HEK293 (cell line): ENCODE measurements at regions of chr1 and their contacts with region 1.

Region 1: DNA sequence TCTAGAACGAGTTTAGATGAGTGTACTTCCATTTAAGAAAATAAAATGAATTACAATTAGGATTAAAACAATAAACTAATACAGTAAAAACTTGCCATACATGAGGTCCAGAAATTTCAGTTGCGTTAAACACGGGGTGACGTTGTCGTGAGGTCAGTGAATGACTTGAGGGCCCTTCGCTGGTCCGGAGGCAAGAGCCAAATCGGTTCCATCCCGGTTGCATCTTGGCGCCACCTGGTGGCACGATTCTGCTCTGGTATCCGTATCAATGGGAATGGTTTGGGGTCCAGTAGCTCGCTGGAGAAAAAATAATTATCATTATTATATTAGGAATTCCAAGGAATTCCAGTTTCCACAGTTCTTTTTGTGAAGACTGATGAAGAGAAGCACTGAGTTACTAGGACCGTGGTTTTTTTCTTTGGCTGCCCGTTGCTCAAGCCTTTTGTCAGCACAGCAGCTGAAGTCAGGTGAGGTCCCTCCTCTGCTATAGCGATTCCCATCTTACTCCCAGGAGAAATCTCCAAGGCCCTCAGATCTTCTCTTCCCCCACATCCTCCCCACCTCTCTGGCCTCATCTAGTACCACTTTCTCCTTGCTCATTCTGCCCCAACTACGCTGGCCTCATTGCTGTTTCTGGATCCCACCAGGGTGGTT is 161.4 kb downstream of the SLC35F3 start:
- H3K4me3 ChIP-seq: no peak overlapping the region
- H3K27ac ChIP-seq: no peak overlapping the region
- H3K4me1 ChIP-seq: no peaks in the 10 kb centered on the region
- CTCF ChIP-seq: peak; percentile 79

Region 2: DNA sequence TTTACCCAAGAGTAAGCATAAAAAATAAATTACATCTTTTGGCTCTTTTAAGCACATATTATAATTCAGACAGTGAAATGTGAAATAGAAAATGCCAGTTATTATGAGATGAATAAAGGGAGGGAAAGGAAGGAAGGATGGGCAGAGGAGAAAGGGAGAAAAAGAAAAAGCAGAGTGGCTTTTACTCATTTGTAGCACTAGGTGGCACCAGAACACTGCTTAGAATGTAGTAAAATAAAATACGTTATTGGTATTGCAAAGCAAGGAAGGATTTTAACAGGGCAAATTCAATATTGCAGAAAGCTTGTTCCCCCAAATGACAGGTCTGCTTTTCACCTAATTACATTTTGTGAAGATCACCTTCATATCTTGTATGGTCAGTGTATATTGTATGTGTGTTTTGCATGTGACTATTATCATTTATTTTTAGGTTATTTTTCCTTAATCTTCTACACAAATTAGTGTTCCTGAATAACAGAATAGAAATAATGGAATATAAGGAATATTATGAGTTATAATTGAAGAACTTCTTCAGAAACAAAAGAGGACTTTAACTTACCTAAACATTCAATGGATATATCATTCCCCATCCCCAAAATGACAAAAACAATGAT is 761.3 kb before region 1 on chr1:
- CTCF ChIA-PET with region 1: interaction called, 14 read pairs
- POLR2A ChIA-PET with region 1: no interaction called
- H3K4me3 ChIP-seq: no peak overlapping the region
- H3K27ac ChIP-seq: no peak overlapping the region
- H3K4me1 ChIP-seq: no peaks in the 10 kb centered on the region
- CTCF ChIP-seq: peak; percentile 92

Region 3: DNA sequence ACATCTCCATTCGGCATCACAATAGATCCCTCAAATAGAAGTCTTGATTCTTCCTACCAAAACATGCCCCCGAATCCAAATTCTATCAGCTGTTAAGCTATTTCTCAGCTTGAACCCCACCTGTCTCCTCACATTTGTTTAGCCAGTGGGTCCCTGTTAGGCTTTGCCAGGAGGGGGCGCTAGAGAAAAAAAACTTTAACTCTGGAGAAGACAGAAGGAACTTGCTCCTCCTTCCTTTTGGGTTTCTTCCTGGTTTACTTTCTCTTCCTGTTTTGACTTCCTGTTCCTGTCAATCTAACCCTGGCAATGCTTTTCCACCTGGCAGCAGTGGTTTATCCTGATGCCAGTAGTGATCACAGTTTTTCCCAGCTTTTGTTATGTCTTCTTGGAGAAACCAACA is 547.6 kb before region 1 on chr1:
- CTCF ChIA-PET with region 1: interaction called, 15 read pairs
- POLR2A ChIA-PET with region 1: no interaction called
- H3K4me3 ChIP-seq: no peak overlapping the region
- H3K27ac ChIP-seq: no peak overlapping the region
- H3K4me1 ChIP-seq: no peaks in the 10 kb centered on the region
- CTCF ChIP-seq: no peak

Region 4: GRCh38 chr1:233805786-233806185 is 260.1 kb before region 1 on chr1:
- CTCF ChIA-PET with region 1: no interaction called
- POLR2A ChIA-PET with region 1: no interaction called
- H3K4me3 ChIP-seq: no peak overlapping the region
- H3K27ac ChIP-seq: no peak overlapping the region
- H3K4me1 ChIP-seq: no peaks in the 10 kb centered on the region
- CTCF ChIP-seq: no peak

Region 5: DNA sequence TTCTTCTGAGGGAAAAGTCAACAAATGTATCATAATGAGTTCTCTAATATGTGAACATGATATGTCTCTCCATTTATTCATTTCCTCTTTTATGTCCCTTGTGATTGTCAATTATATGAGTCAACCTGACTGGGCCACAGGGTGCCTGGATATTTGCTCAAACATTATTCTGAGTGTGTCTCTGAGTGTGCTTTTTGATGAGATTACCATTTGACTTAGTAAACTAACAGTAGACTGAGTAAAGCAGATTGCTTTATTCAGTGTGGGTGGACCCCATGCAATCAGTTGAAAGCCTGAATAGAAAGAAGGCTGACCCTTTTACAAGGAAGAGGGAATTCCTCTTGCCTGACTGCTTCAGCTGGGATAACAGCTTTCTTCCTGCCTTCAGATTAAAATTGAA is 18.8 kb before region 1 on chr1:
- CTCF ChIA-PET with region 1: interaction called, 10 read pairs
- POLR2A ChIA-PET with region 1: no interaction called
- H3K4me3 ChIP-seq: no peak overlapping the region
- H3K27ac ChIP-seq: no peak overlapping the region
- H3K4me1 ChIP-seq: no peaks in the 10 kb centered on the region
- CTCF ChIP-seq: no peak

Region 6: GRCh38 chr1:234089394-234089793 is 23.5 kb after region 1 on chr1:
- CTCF ChIA-PET with region 1: interaction called, 10 read pairs
- POLR2A ChIA-PET with region 1: no interaction called
- H3K4me3 ChIP-seq: no peak overlapping the region
- H3K27ac ChIP-seq: no peak overlapping the region
- H3K4me1 ChIP-seq: peaks cover 8% of the 10 kb centered on the region; the same call in 1 of the 2 replicates
- CTCF ChIP-seq: 0 out of 2 replicates have a peak, but pooled peaks have one; percentile 13

Region 7: DNA sequence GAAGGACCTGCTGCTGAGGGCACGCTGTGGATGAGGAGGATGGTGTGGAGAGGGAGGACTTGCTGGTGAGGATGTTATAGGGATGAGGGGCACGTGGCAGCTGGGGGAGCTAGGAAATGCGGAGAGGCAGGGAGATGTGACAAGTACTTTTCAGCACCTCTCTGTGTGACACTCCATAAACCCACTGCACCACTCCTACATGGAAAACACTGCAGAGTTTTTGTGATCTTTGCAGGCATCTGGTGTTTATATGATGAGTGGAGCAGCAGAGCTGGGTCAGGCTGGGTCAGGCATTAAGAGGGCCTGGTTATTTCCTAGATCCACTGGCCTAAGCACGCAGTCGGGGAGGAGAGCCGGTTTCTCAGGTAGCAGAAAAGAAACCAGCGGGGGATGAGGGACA is 140.0 kb after region 1 on chr1:
- CTCF ChIA-PET with region 1: no interaction called
- POLR2A ChIA-PET with region 1: no interaction called
- H3K4me3 ChIP-seq: no peak overlapping the region
- H3K27ac ChIP-seq: no peak overlapping the region
- H3K4me1 ChIP-seq: no peaks in the 10 kb centered on the region
- CTCF ChIP-seq: no peak